ENCODE measurements at regions of chr15 and their contacts with region 1.

Region 1: DNA sequence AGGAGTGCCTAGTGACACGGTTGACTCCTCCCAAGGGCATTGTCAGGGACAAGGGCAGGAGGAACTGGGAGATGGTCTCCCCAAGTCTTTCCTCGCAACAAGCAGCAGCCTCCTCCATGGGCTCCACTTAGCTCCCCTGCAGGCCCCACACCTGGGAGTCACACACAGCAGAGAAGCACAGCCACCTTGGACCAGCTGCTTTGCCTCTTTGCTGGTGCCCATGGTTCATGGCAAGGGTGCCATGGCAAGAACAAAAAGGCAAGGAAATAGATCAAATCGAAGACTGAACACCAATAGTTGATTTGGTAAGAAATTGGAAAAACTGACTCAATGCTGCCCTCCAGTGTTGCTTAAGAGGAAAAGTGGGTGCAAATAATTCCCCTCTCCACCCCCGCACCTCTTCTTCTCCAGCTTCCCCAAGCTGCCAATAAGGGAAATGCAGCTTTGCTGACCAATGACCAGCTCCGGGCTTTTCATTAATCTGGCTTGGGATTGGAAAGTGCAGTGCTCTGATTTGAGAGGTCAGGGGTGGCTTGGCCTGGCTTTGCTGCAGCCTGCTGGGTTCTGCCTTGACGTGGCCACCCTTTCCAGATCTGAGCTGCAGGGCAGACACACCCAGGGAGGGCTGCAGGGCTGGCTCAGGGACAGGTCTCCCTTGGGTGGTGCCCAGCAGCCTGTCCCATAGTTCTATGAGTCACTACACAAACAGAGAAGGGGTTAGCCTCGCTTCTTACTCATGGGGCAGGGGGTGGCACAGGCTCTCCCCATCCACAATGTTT is 162.0 kb downstream of the KLF13 start:
- DNase-seq: peak in 3 of 5 donors; percentile 55 to 66 (median 62)
- H3K4me3 ChIP-seq: no peak overlapping the region
- H3K4me3 Mint-ChIP-seq: peak overlapping the region in 2 of 7 donors; percentile 16 to 49
- H3K27ac ChIP-seq: no peak overlapping the region
- H3K27ac Mint-ChIP-seq: peak overlapping the region in 5 of 8 donors; percentile 14 to 70 (median 50)
- H3K4me1 ChIP-seq: peaks cover 33% of the 10 kb centered on the region
- H3K4me1 Mint-ChIP-seq: peaks cover 26 to 52% (median 40%) of the 10 kb centered on the region in 3 donors
- H3K27me3 ChIP-seq: no peaks in the 10 kb centered on the region
- H3K27me3 Mint-ChIP-seq: peaks cover 0 to 2% of the 10 kb centered on the region in 2 donors

Region 2: DNA sequence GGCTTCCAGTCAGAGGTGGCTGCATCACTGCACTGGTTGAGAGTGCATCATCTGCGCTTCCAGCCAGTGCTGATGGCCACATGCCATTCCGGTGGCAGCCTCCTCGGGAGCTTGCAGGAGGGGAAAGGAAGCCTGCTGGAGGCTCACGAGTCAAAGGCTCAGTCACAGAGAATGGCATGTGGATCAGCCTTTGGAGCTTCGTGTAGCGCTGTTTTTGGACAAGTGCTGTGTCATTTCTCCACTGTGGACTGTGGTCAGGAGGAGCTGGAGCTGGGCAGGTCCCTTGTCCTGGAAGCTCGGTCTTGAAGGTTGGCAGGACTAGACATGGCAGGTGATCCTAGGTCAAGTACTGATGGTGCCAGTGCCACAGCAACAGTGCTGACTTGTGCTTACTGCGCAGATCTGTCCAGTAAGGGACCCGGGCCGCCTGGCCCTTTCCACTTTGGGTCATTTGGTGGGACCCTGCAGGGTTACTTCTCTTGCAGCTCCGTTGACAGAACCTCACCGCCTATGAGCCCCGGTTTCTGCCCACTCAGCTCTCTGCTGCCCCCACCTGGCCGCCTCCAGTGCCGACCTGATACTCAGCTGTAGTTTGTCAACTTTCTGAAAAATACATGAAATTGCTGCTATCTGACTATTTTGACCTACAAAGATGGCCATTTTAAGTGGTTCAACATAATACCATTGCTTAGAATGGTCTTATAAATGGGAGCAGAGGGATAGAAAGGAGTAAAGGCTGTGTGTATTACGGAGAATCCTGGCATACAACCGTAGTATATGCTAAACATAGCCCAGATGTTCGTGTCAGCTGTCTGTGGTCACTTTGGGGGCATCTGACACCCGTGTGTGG is 359.5 kb before region 1 on chr15:
- CTCF ChIA-PET with region 1: interaction called, 22 read pairs
- POLR2A ChIA-PET with region 1: no interaction called
- DNase-seq: peak; percentile 47 to 72 (median 63)
- H3K4me3 ChIP-seq: no peak overlapping the region
- H3K4me3 Mint-ChIP-seq: no peak overlapping the region
- H3K27ac ChIP-seq: no peak overlapping the region
- H3K27ac Mint-ChIP-seq: no peak overlapping the region
- H3K4me1 ChIP-seq: no peaks in the 10 kb centered on the region
- H3K4me1 Mint-ChIP-seq: peaks cover 3 to 13% (median 8%) of the 10 kb centered on the region in 3 donors
- H3K27me3 ChIP-seq: no peaks in the 10 kb centered on the region
- H3K27me3 Mint-ChIP-seq: peaks cover 4 to 6% of the 10 kb centered on the region in 2 donors

Region 3: GRCh38 chr15:31265871-31266711 is 222.5 kb before region 1 on chr15:
- CTCF ChIA-PET with region 1: interaction called, 22 read pairs
- POLR2A ChIA-PET with region 1: no interaction called
- DNase-seq: peak; percentile 36 to 87 (median 80)
- H3K4me3 ChIP-seq: peak overlapping the region; percentile 46
- H3K4me3 Mint-ChIP-seq: peak overlapping the region; percentile 24 to 85 (median 82)
- H3K27ac ChIP-seq: peak overlapping the region; percentile 46
- H3K27ac Mint-ChIP-seq: peak overlapping the region; percentile 84 to 99 (median 98)
- H3K4me1 ChIP-seq: peaks cover 82% of the 10 kb centered on the region
- H3K4me1 Mint-ChIP-seq: peaks cover 63 to 92% (median 86%) of the 10 kb centered on the region in 3 donors
- H3K27me3 ChIP-seq: no peaks in the 10 kb centered on the region
- H3K27me3 Mint-ChIP-seq: no peaks in the 10 kb centered on the region

Region 4: DNA sequence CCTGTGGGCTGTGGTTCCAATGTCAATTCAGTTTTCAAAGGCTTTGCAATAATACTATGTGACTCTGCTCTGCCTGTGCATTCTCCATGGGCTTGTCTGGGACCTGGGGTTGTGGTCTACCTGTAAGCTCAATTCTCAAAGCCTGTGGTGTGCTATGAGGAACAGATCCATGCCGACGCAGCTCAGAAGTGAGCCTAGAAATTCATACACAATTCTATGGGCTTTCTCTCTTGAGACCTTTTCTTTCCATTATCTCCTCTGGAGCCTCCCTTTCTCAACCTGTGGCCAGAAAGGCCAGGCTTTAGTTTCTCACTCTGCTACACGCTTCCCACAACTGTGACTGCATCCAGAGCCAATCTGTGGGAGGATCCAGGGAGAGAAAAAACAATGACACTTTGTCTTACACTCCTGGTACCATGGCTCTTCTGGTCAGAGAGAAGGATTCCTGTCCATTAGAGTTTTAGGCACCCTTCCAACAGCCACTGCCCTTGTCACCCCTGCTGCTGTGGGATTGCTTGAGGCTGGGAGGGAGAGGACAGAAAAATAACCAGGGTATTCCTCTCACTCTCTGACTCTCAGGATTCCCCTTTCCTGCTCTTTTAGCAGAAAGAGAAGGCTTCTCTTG is 196.1 kb before region 1 on chr15:
- CTCF ChIA-PET with region 1: no interaction called
- POLR2A ChIA-PET with region 1: no interaction called
- DNase-seq: no peak
- H3K4me3 ChIP-seq: no peak overlapping the region
- H3K4me3 Mint-ChIP-seq: no peak overlapping the region
- H3K27ac ChIP-seq: no peak overlapping the region
- H3K27ac Mint-ChIP-seq: peak overlapping the region in 1 of 8 donors; percentile 29
- H3K4me1 ChIP-seq: no peaks in the 10 kb centered on the region
- H3K4me1 Mint-ChIP-seq: no peaks in the 10 kb centered on the region
- H3K27me3 ChIP-seq: no peaks in the 10 kb centered on the region
- H3K27me3 Mint-ChIP-seq: peaks cover 20 to 33% of the 10 kb centered on the region in 2 donors

Region 5: GRCh38 chr15:31344823-31345605 is 143.6 kb before region 1 on chr15:
- CTCF ChIA-PET with region 1: interaction called, 22 read pairs
- POLR2A ChIA-PET with region 1: interaction called, 6 read pairs
- DNase-seq: peak in 1 of 5 donors; percentile 60
- H3K4me3 ChIP-seq: peak overlapping the region; percentile 76
- H3K4me3 Mint-ChIP-seq: peak overlapping the region; percentile 81 to 96 (median 92)
- H3K27ac ChIP-seq: peak overlapping the region; percentile 75
- H3K27ac Mint-ChIP-seq: peak overlapping the region; percentile 90 to 99 (median 96)
- H3K4me1 ChIP-seq: peaks cover 100% of the 10 kb centered on the region
- H3K4me1 Mint-ChIP-seq: peaks cover 99 to 100% (median 100%) of the 10 kb centered on the region in 3 donors
- H3K27me3 ChIP-seq: no peaks in the 10 kb centered on the region
- H3K27me3 Mint-ChIP-seq: peaks cover 0 to under 1% of the 10 kb centered on the region in 2 donors

Region 6: DNA sequence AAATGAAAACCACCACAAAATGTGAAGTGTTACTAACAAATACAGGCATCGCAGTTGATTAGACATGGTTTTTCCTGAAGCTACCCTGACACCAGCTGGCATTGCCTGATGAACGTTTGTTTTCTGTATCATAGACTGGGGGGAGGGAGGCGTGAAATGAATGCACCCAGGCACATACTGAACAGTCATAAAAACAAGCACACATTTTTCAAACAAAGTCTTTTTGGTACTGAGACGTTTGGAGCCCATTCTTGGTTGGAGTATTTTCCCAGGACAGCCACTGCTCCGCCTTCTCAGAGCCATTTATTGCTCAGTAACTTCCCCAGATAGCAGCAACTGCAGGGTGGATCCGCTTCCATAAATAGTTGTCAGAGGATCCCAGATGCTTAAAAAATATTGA is 109.6 kb before region 1 on chr15:
- CTCF ChIA-PET with region 1: interaction called, 13 read pairs
- POLR2A ChIA-PET with region 1: no interaction called
- DNase-seq: no peak
- H3K4me3 ChIP-seq: no peak overlapping the region
- H3K4me3 Mint-ChIP-seq: peak overlapping the region in 3 of 7 donors; percentile 65 to 71 (median 67)
- H3K27ac ChIP-seq: no peak overlapping the region
- H3K27ac Mint-ChIP-seq: peak overlapping the region; percentile 81 to 96 (median 89)
- H3K4me1 ChIP-seq: peaks cover 32% of the 10 kb centered on the region
- H3K4me1 Mint-ChIP-seq: peaks cover 67 to 85% (median 71%) of the 10 kb centered on the region in 3 donors
- H3K27me3 ChIP-seq: no peaks in the 10 kb centered on the region
- H3K27me3 Mint-ChIP-seq: peaks cover 0 to 1% of the 10 kb centered on the region in 2 donors

Region 7: GRCh38 chr15:31435261-31435911 is 53.2 kb before region 1 on chr15:
- CTCF ChIA-PET with region 1: interaction called, 68 read pairs
- POLR2A ChIA-PET with region 1: interaction called, 30 read pairs
- DNase-seq: peak; percentile 67 to 93 (median 88)
- H3K4me3 ChIP-seq: peak overlapping the region; percentile 72
- H3K4me3 Mint-ChIP-seq: peak overlapping the region; percentile 69 to 89 (median 86)
- H3K27ac ChIP-seq: peak overlapping the region; percentile 92
- H3K27ac Mint-ChIP-seq: peak overlapping the region; percentile 94 to 100 (median 98)
- H3K4me1 ChIP-seq: peaks cover 73% of the 10 kb centered on the region
- H3K4me1 Mint-ChIP-seq: peaks cover 73 to 84% (median 75%) of the 10 kb centered on the region in 3 donors
- H3K27me3 ChIP-seq: no peaks in the 10 kb centered on the region
- H3K27me3 Mint-ChIP-seq: no peaks in the 10 kb centered on the region

Measured in CD8-positive, alpha-beta memory T cell (primary cell).